ENCODE measurements at regions of chr3 and their contacts with region 1.

Region 1: GRCh38 chr3:146577662-146578061 is 27.5 kb downstream of the PLSCR5 start:
- DNase-seq: peak; percentile 56
- H3K4me3 Mint-ChIP-seq: no peak overlapping the region
- H3K27ac Mint-ChIP-seq: no peak overlapping the region
- H3K4me1 Mint-ChIP-seq: no peaks in the 10 kb centered on the region
- H3K27me3 Mint-ChIP-seq: no peaks in the 10 kb centered on the region

Region 2: GRCh38 chr3:146065573-146066006 is 512.1 kb before region 1 on chr3:
- CTCF ChIA-PET with region 1: interaction called, 3 read pairs
- intact Hi-C with region 1: loop called (anchors 2 kb)
- DNase-seq: peak; percentile 26
- H3K4me3 Mint-ChIP-seq: no peak overlapping the region
- H3K27ac Mint-ChIP-seq: no peak overlapping the region
- H3K4me1 Mint-ChIP-seq: no peaks in the 10 kb centered on the region
- H3K27me3 Mint-ChIP-seq: no peaks in the 10 kb centered on the region

Region 3: GRCh38 chr3:146218880-146219866 is 358.5 kb before region 1 on chr3:
- CTCF ChIA-PET with region 1: interaction called, 4 read pairs
- intact Hi-C with region 1: loop called (anchors 1 kb)
- DNase-seq: peak; percentile 60
- H3K4me3 Mint-ChIP-seq: no peak overlapping the region
- H3K27ac Mint-ChIP-seq: no peak overlapping the region
- H3K4me1 Mint-ChIP-seq: no peaks in the 10 kb centered on the region
- H3K27me3 Mint-ChIP-seq: peaks cover 4% of the 10 kb centered on the region

Region 4: GRCh38 chr3:146334151-146334550 is 243.5 kb before region 1 on chr3:
- CTCF ChIA-PET with region 1: no interaction called
- intact Hi-C with region 1: loop called (anchors 1 kb)
- DNase-seq: no peak
- H3K4me3 Mint-ChIP-seq: no peak overlapping the region
- H3K27ac Mint-ChIP-seq: no peak overlapping the region
- H3K4me1 Mint-ChIP-seq: no peaks in the 10 kb centered on the region
- H3K27me3 Mint-ChIP-seq: no peaks in the 10 kb centered on the region

Region 5: GRCh38 chr3:146382386-146382785 is 195.3 kb before region 1 on chr3:
- CTCF ChIA-PET with region 1: no interaction called
- intact Hi-C with region 1: loop called (anchors 5 kb)
- DNase-seq: peak; percentile 6
- H3K4me3 Mint-ChIP-seq: no peak overlapping the region
- H3K27ac Mint-ChIP-seq: no peak overlapping the region
- H3K4me1 Mint-ChIP-seq: no peaks in the 10 kb centered on the region
- H3K27me3 Mint-ChIP-seq: peaks cover 4% of the 10 kb centered on the region

Measured in activated naive CD4-positive, alpha-beta T cell treated with anti-CD3 and anti-CD28 coated beads for 36 hours (primary cell).